ENCODE measurements at regions of chr14 and their contacts with region 1.

Region 1: DNA sequence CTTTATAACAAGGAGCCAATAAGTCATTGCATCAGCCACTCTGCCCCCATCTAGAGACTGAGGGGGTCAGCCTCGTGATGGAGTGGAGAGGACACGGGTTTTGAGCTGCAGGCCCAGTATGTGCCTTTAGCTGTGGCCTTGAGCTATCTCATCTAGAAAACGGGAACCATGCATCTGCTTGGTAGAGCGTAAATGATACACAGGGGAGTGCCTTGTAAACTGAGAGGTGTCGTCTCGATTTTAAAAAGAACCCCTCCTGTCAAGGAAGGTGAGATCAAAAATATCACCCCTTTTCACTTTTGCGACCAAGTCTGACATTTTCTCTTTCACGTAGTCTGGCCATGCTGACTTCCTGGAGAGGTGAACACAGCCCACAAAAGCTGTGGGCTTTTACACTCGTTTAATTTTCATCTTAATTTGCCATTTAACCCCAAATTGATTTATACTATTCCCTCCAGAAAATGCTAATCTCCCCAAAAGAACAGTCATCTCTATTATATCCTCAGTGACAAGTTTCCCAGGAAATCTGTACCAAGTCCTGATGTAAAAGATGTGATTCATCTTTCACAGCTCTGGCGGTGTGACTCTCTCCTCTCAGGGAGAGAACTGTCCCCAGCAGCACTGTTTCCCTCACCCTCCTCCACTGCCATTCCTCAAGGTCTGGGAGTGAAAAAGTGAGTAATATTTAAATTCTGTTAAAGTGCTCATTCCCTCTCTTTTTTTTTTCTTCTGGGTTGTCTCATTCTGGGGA is 30.6 kb downstream of the VCPKMT start:
- DNase-seq: peak; percentile 44
- ATAC-seq: peak; percentile 75
- H3K4me3 Mint-ChIP-seq: peak overlapping the region; percentile 68
- H3K27ac Mint-ChIP-seq: peak overlapping the region; percentile 97
- H3K4me1 Mint-ChIP-seq: peaks cover 92% of the 10 kb centered on the region
- H3K27me3 Mint-ChIP-seq: no peaks in the 10 kb centered on the region
- CTCF ChIP-seq: no peak

Region 2: DNA sequence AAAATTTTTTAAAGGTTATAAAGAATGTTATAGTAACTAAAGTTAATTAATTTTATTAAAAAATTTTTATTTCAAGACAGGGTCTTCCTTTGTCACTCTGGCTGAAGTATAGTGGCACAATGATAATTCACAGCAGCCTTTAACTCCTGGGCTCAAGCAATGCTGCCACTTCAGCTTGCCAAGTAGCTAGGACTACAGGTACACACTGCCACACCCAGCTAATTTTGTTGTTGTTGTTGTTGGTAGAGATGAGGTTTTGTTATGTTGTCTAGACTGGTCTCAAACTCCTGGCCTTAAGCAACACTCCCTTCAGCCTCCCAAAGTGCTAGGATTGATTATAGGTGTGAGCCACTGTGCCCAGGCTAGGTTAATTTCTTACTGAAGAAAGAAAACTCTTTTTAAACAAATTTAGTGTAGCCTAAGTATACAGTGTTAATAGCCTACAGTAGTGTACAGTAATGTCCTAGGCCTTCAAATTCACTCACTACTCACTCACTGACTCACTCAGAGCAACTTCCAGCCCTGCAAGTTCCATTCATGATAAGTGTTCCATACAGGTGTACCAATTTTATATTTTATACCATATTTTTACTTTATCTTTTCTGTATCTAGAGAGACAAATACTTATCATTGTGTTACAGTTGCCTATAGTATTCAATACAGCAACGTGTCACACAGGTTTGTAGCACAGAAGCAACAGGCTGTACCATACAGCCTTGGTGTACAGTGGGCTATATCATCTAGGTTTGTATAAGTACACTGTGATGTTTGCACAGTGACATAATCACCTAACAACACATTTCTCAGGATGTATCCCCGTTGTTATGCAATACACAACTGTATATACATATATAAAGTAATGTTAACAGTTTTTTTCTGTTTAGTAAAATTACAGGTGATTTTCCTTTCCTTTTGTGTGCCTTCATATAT is 426.0 kb before region 1 on chr14:
- CTCF ChIA-PET with region 1: no interaction called
- POLR2A ChIA-PET with region 1: no interaction called
- intact Hi-C with region 1: no loop called
- DNase-seq: no peak
- ATAC-seq: no peak
- H3K4me3 Mint-ChIP-seq: no peak overlapping the region
- H3K27ac Mint-ChIP-seq: no peak overlapping the region
- H3K4me1 Mint-ChIP-seq: no peaks in the 10 kb centered on the region
- H3K27me3 Mint-ChIP-seq: no peaks in the 10 kb centered on the region
- CTCF ChIP-seq: no peak

Region 3: GRCh38 chr14:49959822-49960408 is 125.8 kb before region 1 on chr14:
- CTCF ChIA-PET with region 1: no interaction called
- POLR2A ChIA-PET with region 1: interaction called, 8 read pairs
- intact Hi-C with region 1: loop called (anchors 1 kb)
- DNase-seq: no peak
- ATAC-seq: peak; percentile 59
- H3K4me3 Mint-ChIP-seq: peak overlapping the region; percentile 71
- H3K27ac Mint-ChIP-seq: peak overlapping the region; percentile 96
- H3K4me1 Mint-ChIP-seq: peaks cover 67% of the 10 kb centered on the region
- H3K27me3 Mint-ChIP-seq: no peaks in the 10 kb centered on the region
- CTCF ChIP-seq: no peak

Region 4: GRCh38 chr14:49984424-49984823 is 101.3 kb before region 1 on chr14:
- CTCF ChIA-PET with region 1: no interaction called
- POLR2A ChIA-PET with region 1: no interaction called
- intact Hi-C with region 1: no loop called
- DNase-seq: no peak
- ATAC-seq: no peak
- H3K4me3 Mint-ChIP-seq: no peak overlapping the region
- H3K27ac Mint-ChIP-seq: no peak overlapping the region
- H3K4me1 Mint-ChIP-seq: peaks cover 36% of the 10 kb centered on the region
- H3K27me3 Mint-ChIP-seq: no peaks in the 10 kb centered on the region
- CTCF ChIP-seq: no peak

Region 5: GRCh38 chr14:50023671-50024490 is 61.9 kb before region 1 on chr14:
- CTCF ChIA-PET with region 1: no interaction called
- POLR2A ChIA-PET with region 1: no interaction called
- intact Hi-C with region 1: no loop called
- DNase-seq: no peak
- ATAC-seq: no peak
- H3K4me3 Mint-ChIP-seq: no peak overlapping the region
- H3K27ac Mint-ChIP-seq: no peak overlapping the region
- H3K4me1 Mint-ChIP-seq: peaks cover 18% of the 10 kb centered on the region
- H3K27me3 Mint-ChIP-seq: no peaks in the 10 kb centered on the region
- CTCF ChIP-seq: no peak

Region 6: GRCh38 chr14:50038398-50039119 is 47.2 kb before region 1 on chr14:
- CTCF ChIA-PET with region 1: interaction called, 4 read pairs
- POLR2A ChIA-PET with region 1: interaction called, 34 read pairs
- intact Hi-C with region 1: loop called (anchors 1 kb)
- DNase-seq: no peak
- ATAC-seq: peak; percentile 78
- H3K4me3 Mint-ChIP-seq: peak overlapping the region; percentile 52
- H3K27ac Mint-ChIP-seq: peak overlapping the region; percentile 93
- H3K4me1 Mint-ChIP-seq: peaks cover 45% of the 10 kb centered on the region
- H3K27me3 Mint-ChIP-seq: no peaks in the 10 kb centered on the region
- CTCF ChIP-seq: no peak

Region 7: GRCh38 chr14:50045039-50045711 is 40.6 kb before region 1 on chr14:
- CTCF ChIA-PET with region 1: no interaction called
- POLR2A ChIA-PET with region 1: interaction called, 14 read pairs
- intact Hi-C with region 1: loop called (anchors 1 kb)
- DNase-seq: no peak
- ATAC-seq: peak; percentile 70
- H3K4me3 Mint-ChIP-seq: peak overlapping the region; percentile 2
- H3K27ac Mint-ChIP-seq: peak overlapping the region; percentile 92
- H3K4me1 Mint-ChIP-seq: peaks cover 71% of the 10 kb centered on the region
- H3K27me3 Mint-ChIP-seq: no peaks in the 10 kb centered on the region
- CTCF ChIP-seq: no peak

Region 8: GRCh38 chr14:50067723-50068495 is 17.8 kb before region 1 on chr14:
- CTCF ChIA-PET with region 1: interaction called, 30 read pairs
- POLR2A ChIA-PET with region 1: interaction called, 397 read pairs
- intact Hi-C with region 1: loop called (anchors 1 kb)
- DNase-seq: no peak
- ATAC-seq: no peak
- H3K4me3 Mint-ChIP-seq: no peak overlapping the region
- H3K27ac Mint-ChIP-seq: peak overlapping the region; percentile 69
- H3K4me1 Mint-ChIP-seq: peaks cover 79% of the 10 kb centered on the region
- H3K27me3 Mint-ChIP-seq: no peaks in the 10 kb centered on the region
- CTCF ChIP-seq: no peak

Region 9: GRCh38 chr14:50099335-50099734 is 13.6 kb after region 1 on chr14:
- CTCF ChIA-PET with region 1: interaction called, 19 read pairs
- POLR2A ChIA-PET with region 1: interaction called, 64 read pairs
- intact Hi-C with region 1: loop called (anchors 1 kb)
- DNase-seq: no peak
- ATAC-seq: no peak
- H3K4me3 Mint-ChIP-seq: no peak overlapping the region
- H3K27ac Mint-ChIP-seq: peak overlapping the region; percentile 62
- H3K4me1 Mint-ChIP-seq: peaks cover 74% of the 10 kb centered on the region
- H3K27me3 Mint-ChIP-seq: no peaks in the 10 kb centered on the region
- CTCF ChIP-seq: no peak

Region 10: DNA sequence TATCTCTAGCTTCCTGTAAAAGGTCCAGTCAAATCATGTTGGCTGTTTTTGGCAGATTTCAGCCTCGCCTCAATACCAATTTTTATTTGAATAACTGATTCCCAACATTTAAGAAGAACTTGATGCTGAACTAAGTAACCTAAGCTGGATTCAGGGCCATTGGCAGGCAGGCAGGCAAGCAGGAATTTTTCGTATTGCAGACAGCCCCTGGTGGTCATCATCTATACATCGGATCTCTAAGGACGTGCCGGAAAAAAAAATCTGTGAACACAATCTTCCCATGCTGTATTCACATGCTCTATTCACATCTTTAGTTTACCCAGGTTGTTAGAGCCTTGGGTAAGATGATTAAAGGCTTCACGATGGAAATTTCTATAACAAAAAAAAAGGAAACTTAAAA is 23.6 kb after region 1 on chr14:
- CTCF ChIA-PET with region 1: interaction called, 19 read pairs
- POLR2A ChIA-PET with region 1: interaction called, 64 read pairs
- intact Hi-C with region 1: loop called (anchors 1 kb)
- DNase-seq: no peak
- ATAC-seq: no peak
- H3K4me3 Mint-ChIP-seq: no peak overlapping the region
- H3K27ac Mint-ChIP-seq: peak overlapping the region; percentile 20
- H3K4me1 Mint-ChIP-seq: peaks cover 46% of the 10 kb centered on the region
- H3K27me3 Mint-ChIP-seq: no peaks in the 10 kb centered on the region
- CTCF ChIP-seq: no peak

Region 11: GRCh38 chr14:50697659-50698290 is 612.0 kb after region 1 on chr14:
- CTCF ChIA-PET with region 1: no interaction called
- POLR2A ChIA-PET with region 1: no interaction called
- intact Hi-C with region 1: no loop called
- DNase-seq: no peak
- ATAC-seq: no peak
- H3K4me3 Mint-ChIP-seq: no peak overlapping the region
- H3K27ac Mint-ChIP-seq: no peak overlapping the region
- H3K4me1 Mint-ChIP-seq: peaks cover 6% of the 10 kb centered on the region
- H3K27me3 Mint-ChIP-seq: no peaks in the 10 kb centered on the region
- CTCF ChIP-seq: no peak